ENCODE measurements at regions of chr1 and their contacts with region 1.

Region 1: DNA sequence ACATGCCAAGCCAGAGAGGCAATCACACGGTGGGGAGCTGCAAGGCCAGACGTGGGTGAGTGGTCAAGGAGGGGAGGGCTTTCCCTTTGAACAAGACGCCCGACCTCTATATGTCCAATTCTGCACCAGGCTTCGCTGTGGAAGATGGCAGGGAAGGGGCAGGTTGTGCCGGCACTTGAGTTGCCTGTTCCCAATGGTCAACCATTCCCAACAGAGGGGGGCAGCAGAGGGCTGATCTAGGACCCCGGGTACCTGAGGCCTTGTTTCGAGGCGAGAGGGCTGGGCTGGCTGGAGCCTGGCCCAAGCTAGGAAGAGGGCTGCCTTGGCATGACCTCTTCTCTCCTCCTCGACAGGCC is 64.9 kb downstream of the TMEM53 start:
- DNase-seq: peak; percentile 78 to 90 (median 85)
- H3K4me3 ChIP-seq: no peak overlapping the region
- H3K27ac ChIP-seq: no peak overlapping the region
- H3K4me1 ChIP-seq: no peaks in the 10 kb centered on the region
- H3K27me3 ChIP-seq: no peaks in the 10 kb centered on the region
- CTCF ChIP-seq: peak; percentile 33 to 73 (median 68)
- POLR2A ChIP-seq: no peak

Region 2: DNA sequence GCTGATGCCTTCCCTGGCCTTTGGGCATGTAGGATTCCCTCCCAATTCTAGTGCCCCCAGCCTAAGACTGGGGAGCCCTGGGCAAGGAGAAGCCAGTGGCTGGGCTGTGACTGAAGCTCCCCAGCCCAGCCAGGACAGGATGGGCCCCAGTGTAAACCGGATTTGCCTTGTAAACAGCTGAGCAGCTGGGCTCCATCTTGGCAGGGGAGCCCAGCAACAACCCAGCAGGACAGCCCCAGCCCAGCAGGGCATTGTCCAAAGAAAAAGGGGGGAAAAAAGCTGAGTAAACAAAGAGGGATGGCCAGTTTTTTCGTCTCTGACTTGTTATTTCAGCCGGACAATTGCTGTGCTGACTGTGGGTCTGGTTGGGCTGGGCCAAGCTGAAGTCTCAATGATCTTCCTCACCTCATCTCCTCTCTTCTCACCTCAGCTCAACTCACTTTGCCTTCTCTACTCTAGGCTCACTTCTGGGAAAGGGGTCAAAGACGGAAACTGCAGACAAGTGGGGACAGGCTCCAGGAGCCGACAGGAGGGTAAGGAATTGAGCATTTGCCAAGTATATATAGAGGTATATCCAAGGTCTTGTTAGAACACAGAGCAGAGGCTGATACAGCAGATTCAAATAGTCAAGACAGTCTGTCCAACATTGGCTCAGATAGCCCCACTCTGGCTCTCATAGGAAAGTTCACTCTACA is 32.8 kb before region 1 on chr1:
- intact Hi-C with region 1: no loop called
- DNase-seq: no peak
- H3K4me3 ChIP-seq: no peak overlapping the region
- H3K27ac ChIP-seq: no peak overlapping the region
- H3K4me1 ChIP-seq: no peaks in the 10 kb centered on the region
- H3K27me3 ChIP-seq: peaks cover 10% of the 10 kb centered on the region
- CTCF ChIP-seq: no peak
- POLR2A ChIP-seq: no peak

Region 3: DNA sequence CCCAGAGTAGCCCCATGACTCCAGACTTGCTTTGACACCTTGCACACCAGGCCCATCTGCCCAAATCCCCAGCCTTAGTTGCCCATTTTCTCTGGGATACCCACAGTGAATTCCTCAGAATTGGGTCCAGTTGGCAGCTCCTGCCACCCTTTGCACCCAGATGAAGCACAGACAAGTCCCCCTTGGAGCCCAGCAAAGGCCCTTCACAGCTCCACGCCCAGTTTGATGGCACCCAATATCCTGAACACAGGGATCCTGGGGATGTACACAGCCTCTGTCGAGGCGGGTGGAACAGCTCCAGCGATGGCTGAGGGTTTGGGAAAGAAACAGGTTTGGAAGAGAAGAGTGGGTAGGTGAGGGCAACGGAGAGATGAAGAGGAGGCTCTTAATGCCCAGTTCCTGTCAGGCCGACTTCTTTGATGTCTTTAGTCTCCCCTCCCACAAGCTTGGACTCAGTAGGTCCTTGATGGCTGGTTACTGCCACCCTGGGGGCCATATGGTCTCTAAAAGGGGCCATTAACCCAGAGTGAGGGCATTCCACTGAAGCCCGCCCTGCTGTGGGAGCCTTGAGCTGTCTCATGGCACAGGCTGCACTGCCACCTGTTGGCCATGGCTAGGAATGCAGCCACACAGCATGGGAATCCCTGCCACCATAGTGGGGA is 43.2 kb after region 1 on chr1:
- intact Hi-C with region 1: loop called (anchors 2 to 5 kb)
- DNase-seq: peak; percentile 69 to 93 (median 84)
- H3K4me3 ChIP-seq: no peak overlapping the region
- H3K27ac ChIP-seq: no peak overlapping the region
- H3K4me1 ChIP-seq: no peaks in the 10 kb centered on the region
- H3K27me3 ChIP-seq: no peaks in the 10 kb centered on the region
- CTCF ChIP-seq: peak; percentile 87 to 98 (median 94)
- POLR2A ChIP-seq: no peak

Measured in adrenal gland (tissue), 19 donors.